Activated CD4-positive, alpha-beta memory T cell treated with anti-CD3 and anti-CD28 coated beads for 36 hours (primary cell): ENCODE measurements at regions of chr4 and their contacts with region 1.

Region 1: DNA sequence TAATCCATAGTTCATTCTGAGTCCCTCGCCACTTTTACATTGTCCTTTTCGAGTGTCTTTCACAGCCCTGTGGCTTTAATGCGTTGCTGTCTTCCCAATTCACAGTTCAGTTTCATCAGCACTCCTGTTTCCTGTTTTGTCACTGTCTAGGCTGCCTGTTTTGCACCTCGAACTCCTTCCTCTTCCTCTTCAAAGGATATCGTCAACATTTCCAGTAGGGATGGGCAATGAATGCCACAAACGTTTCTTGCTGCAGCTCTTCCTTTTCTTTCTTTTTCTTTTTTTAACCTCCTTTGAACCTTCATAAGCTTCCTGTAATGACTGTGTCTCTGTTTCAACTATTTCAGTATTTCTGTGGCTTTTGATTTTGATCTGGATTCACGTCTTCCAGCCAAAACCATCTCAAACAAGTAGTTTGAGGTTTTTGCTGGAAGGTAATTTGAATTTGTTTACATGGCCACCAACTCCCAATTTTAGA is 105.4 kb downstream of the ANXA3 start:
- DNase-seq: peak; percentile 25
- H3K4me3 Mint-ChIP-seq: peak overlapping the region; percentile 28
- H3K27ac Mint-ChIP-seq: peak overlapping the region; percentile 19
- H3K4me1 Mint-ChIP-seq: peaks cover 30% of the 10 kb centered on the region
- H3K27me3 Mint-ChIP-seq: peaks cover 2% of the 10 kb centered on the region

Region 2: DNA sequence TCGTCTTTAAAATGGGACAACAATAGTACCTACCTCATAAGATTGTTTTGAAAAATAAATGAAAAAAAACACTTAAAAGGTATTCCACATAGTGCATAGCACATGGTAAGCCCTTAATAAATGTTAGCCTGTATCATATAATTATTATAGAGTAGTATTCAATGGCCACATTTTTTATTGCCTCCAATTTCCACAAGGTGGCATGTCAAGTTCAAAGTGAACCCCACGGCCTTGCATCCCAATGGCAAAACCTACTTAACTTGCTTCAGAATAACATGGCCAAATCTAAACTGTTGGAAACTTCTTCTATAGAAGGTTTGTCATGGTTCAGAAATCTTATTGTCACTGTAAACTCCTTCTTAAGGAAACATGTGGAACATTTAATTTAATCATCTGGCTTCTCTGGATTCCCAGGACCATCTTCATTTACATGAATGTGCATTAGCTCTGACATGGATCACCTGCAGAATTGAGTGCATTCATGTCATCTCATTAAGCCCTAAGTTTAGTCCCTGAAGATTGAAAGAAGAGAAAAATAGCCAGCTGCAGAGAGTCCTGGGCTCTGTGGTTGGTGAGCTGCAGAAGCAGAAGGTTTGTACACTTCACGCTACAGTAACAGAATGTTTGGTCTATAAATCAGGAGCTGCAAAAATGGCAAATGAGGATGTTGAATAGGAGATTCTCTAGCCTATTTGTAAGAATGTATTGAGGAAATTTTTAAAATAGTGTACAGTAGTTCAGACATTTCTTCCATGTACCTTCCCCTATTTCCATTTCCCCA is 44.4 kb before region 1 on chr4:
- CTCF ChIA-PET with region 1: no interaction called
- POLR2A ChIA-PET with region 1: no interaction called
- intact Hi-C with region 1: loop called (anchors 2 kb)
- DNase-seq: peak; percentile 15
- H3K4me3 Mint-ChIP-seq: no peak overlapping the region
- H3K27ac Mint-ChIP-seq: no peak overlapping the region
- H3K4me1 Mint-ChIP-seq: peaks cover 23% of the 10 kb centered on the region
- H3K27me3 Mint-ChIP-seq: no peaks in the 10 kb centered on the region

Region 3: DNA sequence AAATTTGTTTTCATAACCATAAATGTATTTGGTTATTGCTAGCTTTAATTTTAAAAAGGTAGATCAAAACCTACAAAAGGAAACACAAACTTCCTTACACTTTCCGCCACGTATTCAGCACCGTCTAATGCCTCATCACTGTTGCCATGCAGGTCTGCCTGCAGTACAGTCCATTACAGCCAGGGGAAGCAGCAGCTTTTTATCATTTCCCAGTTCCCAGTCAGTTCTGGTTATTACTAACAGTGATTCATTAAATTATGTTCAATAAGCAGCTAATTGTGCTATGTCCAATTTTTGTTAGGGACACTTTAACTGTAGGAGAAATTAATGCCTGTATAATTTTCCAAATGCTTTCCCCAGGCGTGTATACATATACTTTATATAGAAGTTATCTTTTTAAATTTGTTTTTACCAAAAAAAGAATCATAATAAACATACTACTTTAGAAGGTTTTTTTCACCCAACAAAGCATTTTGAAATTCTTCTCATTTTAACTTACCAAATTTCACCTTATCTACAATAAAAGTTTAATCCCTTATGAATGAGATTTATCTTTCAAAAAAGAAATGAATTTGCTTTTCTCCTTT is 12.2 kb before region 1 on chr4:
- CTCF ChIA-PET with region 1: interaction called, 14 read pairs
- POLR2A ChIA-PET with region 1: no interaction called
- intact Hi-C with region 1: no loop called
- DNase-seq: peak; percentile 57
- H3K4me3 Mint-ChIP-seq: no peak overlapping the region
- H3K27ac Mint-ChIP-seq: no peak overlapping the region
- H3K4me1 Mint-ChIP-seq: no peaks in the 10 kb centered on the region
- H3K27me3 Mint-ChIP-seq: no peaks in the 10 kb centered on the region

Region 4: DNA sequence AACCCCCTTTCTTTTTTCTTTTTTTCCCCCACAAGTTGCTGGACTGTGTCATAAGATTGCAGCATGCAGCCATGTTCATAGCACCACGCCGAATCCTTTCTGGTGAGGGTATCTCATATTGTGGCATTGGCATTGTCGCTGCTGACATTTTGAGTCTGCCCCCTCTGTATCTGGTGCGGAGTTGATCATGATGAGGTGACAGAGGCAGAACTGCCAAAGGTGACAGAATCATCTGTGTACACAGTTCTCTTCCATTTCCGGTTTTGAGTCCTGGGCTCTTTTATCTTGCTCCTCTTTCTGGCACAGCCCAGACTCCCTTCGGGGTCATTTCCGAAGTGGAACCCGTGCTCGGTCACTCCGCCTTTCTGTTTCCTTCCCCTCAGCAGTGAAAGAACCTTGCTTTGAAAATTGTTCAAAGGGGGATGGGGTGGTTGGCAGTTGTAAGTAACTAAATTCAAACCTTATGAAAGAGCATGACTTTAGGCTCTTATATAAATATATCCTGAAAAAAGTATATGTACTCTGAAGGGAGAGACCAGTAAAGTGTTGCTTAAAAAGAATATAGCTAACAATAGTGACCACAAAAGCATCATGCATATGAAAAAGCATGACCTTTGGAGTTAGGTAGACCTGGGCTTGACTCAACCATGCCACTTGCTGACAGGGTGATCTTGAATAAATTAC is 64.1 kb after region 1 on chr4:
- CTCF ChIA-PET with region 1: no interaction called
- POLR2A ChIA-PET with region 1: no interaction called
- intact Hi-C with region 1: loop called (anchors 1 kb)
- DNase-seq: peak; percentile 57
- H3K4me3 Mint-ChIP-seq: peak overlapping the region; percentile 14
- H3K27ac Mint-ChIP-seq: peak overlapping the region; percentile 21
- H3K4me1 Mint-ChIP-seq: peaks cover 16% of the 10 kb centered on the region
- H3K27me3 Mint-ChIP-seq: no peaks in the 10 kb centered on the region

Region 5: DNA sequence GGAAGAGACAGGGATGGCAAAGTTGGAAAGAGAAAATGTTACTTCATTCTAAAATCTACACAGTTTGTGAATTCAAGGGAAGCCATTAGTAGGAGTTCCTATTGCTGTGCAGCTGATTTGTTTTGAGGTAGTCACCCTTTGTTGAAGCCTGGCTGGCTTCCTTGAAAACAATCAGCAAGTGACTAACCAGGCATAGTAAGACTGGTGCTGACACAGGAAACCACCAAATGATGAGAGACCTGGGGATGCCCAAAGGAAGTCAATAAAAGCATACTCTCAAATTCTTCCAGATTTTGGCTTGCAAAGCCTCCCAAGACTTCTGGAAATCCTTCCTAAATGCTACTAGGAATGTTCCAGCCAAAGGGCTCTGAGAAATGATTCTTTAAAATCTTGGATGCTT is 1516.4 kb after region 1 on chr4:
- CTCF ChIA-PET with region 1: no interaction called
- POLR2A ChIA-PET with region 1: no interaction called
- intact Hi-C with region 1: loop called (anchors 10 kb)
- DNase-seq: peak; percentile 71
- H3K4me3 Mint-ChIP-seq: peak overlapping the region; percentile 18
- H3K27ac Mint-ChIP-seq: peak overlapping the region; percentile 81
- H3K4me1 Mint-ChIP-seq: peaks cover 55% of the 10 kb centered on the region
- H3K27me3 Mint-ChIP-seq: no peaks in the 10 kb centered on the region